PC-3 (cell line): ENCODE measurements at regions of chr15 and their contacts with region 1.

Region 1: GRCh38 chr15:44663409-44664308 is at the start of gene SPG11:
- DNase-seq: peak; percentile 99
- ATAC-seq: peak; percentile 89
- H3K4me3 ChIP-seq: peak within 1 kb of the TSS; percentile 84
- H3K27ac ChIP-seq: peak within 1 kb of the TSS; percentile 69
- H3K4me1 ChIP-seq: peaks cover 16% of the 10 kb centered on the region; the same call in 1 of the 2 replicates
- H3K27me3 ChIP-seq: no peaks in the 10 kb centered on the region
- CTCF ChIP-seq: peak; percentile 87
- total RNA-seq, gene SPG11: 37.2 and 54.1 TPM in 2 replicates

Region 2: DNA sequence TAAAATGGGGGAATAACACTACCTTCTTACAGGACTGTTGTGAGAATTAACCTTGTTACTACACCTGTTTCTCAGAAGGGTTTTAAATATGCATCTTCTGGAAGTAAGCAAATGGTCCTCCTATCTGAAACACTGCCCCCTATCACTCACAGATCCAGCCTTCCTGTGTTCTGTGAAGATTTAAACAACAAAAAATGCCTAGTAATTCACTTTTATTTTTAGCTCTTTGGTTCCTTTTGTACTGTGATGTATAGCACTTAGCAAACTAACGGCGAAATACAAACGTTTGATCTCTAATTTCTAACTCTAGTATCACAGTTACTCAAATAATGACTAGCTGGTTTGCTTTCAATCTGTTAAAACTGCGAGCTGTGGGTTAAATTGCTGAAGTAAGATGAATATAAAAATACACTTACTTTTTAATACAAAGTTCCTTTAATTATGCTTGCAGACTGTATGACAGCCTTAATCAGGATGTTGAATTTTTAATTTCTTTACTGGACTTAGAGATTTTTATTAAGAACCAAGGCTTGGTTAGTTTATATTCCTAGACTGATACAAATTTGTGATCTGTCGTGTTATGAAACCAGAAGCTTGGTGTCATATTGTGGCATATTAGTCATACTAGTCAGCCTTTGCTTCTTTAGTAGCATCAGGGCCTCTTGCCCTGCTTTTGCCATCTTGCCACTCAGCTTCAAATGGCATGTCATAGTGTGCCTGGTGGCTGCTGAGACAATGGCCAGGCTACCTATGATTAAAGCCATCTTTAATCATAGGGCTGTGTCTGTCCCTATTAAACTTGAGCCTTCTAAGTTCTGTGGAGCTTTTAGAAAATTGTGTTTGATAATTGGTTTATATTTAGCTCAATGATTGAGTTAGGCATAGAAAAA is 117.5 kb before region 1 on chr15:
- CTCF ChIA-PET with region 1: no interaction called
- POLR2A ChIA-PET with region 1: no interaction called
- intact Hi-C with region 1: no loop called
- DNase-seq: peak; percentile 43
- ATAC-seq: peak; percentile 44
- H3K4me3 ChIP-seq: no peak overlapping the region
- H3K27ac ChIP-seq: no peak overlapping the region
- H3K4me1 ChIP-seq: peaks cover 22% of the 10 kb centered on the region
- H3K27me3 ChIP-seq: no peaks in the 10 kb centered on the region
- CTCF ChIP-seq: peak; percentile 69

Region 3: DNA sequence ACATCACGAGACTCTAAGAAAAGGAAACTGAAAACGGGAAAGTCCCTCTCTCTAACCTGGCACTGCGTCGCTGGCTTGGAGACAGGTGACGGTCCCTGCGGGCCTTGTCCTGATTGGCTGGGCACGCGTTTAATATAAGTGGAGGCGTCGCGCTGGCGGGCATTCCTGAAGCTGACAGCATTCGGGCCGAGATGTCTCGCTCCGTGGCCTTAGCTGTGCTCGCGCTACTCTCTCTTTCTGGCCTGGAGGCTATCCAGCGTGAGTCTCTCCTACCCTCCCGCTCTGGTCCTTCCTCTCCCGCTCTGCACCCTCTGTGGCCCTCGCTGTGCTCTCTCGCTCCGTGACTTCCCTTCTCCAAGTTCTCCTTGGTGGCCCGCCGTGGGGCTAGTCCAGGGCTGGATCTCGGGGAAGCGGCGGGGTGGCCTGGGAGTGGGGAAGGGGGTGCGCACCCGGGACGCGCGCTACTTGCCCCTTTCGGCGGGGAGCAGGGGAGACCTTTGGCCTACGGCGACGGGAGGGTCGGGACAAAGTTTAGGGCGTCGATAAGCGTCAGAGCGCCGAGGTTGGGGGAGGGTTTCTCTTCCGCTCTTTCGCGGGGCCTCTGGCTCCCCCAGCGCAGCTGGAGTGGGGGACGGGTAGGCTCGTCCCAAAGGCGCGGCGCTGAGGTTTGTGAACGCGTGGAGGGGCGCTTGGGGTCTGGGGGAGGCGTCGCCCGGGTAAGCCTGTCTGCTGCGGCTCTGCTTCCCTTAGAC is 47.9 kb after region 1 on chr15 and contains the start of gene B2M:
- CTCF ChIA-PET with region 1: interaction called, 30 read pairs
- POLR2A ChIA-PET with region 1: interaction called, 10 read pairs
- intact Hi-C with region 1: loop called (anchors 1 kb)
- DNase-seq: peak; percentile 98
- ATAC-seq: peak; percentile 88
- H3K4me3 ChIP-seq: peak within 1 kb of the TSS; percentile 76
- H3K27ac ChIP-seq: peak within 1 kb of the TSS; percentile 44
- H3K4me1 ChIP-seq: peaks cover 20% of the 10 kb centered on the region
- H3K27me3 ChIP-seq: no peaks in the 10 kb centered on the region
- CTCF ChIP-seq: no peak
- total RNA-seq, gene B2M: 476 and 608 TPM in 2 replicates

Region 4: DNA sequence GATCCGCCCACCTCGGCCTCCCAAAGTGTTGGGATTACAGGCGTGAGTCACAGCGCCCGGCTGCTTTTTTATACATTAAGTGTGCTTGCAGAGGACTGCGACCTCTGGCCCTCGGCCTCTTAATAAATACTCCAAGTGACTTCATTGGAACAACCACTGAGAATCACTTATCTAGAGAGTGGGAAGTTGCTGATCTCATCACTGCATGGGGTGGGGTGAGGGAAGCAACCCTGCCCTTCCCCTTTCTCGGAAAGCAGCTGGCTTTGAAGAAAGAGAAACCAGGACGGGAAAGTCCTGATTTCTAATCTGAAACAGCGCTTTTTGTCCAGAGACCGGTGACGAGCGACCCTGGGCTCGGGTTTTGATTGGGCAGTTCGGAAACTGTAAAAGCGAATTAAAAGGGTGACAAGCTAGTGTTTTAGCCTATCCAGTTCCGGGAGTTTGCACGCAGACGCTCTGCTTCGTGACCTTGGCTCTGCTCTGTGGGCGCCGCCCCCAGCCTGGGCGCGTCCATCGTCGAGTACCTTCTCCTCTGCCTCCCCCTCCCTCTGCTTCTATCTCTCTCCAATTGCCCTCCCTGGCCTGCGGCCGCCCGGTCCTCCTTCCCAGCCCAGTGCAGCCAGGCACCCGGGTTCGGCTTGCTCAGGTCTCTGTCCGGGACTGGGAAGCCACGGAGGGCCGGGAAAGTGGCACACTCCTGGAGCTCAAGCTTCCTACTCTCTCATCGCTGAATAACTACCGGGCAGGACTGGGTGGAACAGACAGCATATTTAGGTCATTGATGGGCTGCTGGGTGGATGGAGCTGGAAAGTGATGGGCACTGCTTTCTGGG is 65.1 kb after region 1 on chr15:
- CTCF ChIA-PET with region 1: interaction called, 10 read pairs
- POLR2A ChIA-PET with region 1: interaction called, 9 read pairs
- intact Hi-C with region 1: loop called (anchors 2 kb)
- DNase-seq: peak; percentile 98
- ATAC-seq: peak; percentile 80
- H3K4me3 ChIP-seq: peak overlapping the region; percentile 82
- H3K27ac ChIP-seq: peak overlapping the region; percentile 89
- H3K4me1 ChIP-seq: peaks cover 34% of the 10 kb centered on the region
- H3K27me3 ChIP-seq: no peaks in the 10 kb centered on the region
- CTCF ChIP-seq: no peak

Region 5: GRCh38 chr15:44738340-44738984 is 74.8 kb after region 1 on chr15:
- CTCF ChIA-PET with region 1: interaction called, 46 read pairs
- POLR2A ChIA-PET with region 1: no interaction called
- intact Hi-C with region 1: loop called (anchors 1 kb)
- DNase-seq: peak; percentile 87
- ATAC-seq: no peak
- H3K4me3 ChIP-seq: no peak overlapping the region
- H3K27ac ChIP-seq: no peak overlapping the region
- H3K4me1 ChIP-seq: no peaks in the 10 kb centered on the region
- H3K27me3 ChIP-seq: no peaks in the 10 kb centered on the region
- CTCF ChIP-seq: peak; percentile 94